ENCODE measurements at regions of chr6 and their contacts with region 1.

Region 1: DNA sequence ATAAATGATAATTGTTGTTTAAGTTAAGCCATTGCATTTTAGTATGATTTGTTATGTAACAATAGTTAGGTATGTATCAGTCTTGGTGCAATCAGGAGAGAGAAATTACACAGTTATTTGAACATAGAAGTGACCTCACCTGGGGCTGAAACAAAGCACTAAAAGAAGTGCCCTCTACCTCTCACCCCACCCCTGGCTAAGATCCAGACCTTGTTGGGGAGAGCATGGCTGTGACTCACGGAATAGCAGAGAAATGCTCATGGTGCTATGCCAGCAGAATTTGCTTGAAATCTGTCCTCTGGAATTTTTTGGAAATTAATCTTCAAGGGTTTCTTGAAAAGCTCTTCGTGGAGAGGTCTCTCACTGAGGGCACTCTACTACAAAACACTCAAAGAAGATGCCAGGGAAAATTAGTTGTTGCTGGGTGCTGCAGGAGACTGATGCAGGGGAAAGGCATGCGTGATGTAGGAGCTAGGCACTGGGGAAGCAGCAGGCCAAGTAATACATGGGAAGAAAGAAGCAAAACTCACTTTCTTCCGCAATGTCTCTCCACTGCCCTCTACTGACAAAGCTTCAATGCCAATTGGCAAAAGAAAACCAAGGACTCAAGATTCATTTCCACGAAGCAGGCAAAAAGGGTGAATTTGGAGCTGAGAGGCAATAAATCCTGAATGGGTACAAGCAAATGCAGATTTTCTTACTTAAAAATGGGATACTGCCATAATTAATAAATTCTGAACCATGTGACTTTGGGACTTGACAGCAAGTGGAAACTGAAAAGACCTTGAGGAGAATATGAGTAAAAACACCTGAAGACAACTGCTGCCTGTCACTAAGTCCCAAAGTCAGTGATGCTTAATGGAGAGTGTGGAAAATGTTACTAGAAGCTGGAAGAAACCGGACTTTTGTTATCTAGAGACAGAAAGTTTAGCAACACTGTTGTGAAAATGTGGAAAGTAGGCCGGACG is 136.3 kb upstream of the ZNF184 start:
- DNase-seq: peak; percentile 86
- H3K4me3 ChIP-seq: no peak overlapping the region
- H3K27ac ChIP-seq: peak overlapping the region; percentile 11
- H3K4me1 ChIP-seq: peaks cover 17% of the 10 kb centered on the region
- H3K27me3 ChIP-seq: no peaks in the 10 kb centered on the region
- CTCF ChIP-seq: peak; percentile 85 to 89

Region 2: GRCh38 chr6:27213544-27214125 is 395.6 kb before region 1 on chr6:
- CTCF ChIA-PET with region 1: no interaction called
- dilution Hi-C with region 1: no loop called
- in situ Hi-C with region 1: no loop called
- intact Hi-C with region 1: loop called (anchors 5 kb)
- DNase-seq: peak; percentile 40
- H3K4me3 ChIP-seq: peak overlapping the region in 1 of 3 experiments; percentile 58
- H3K27ac ChIP-seq: no peak overlapping the region
- H3K4me1 ChIP-seq: no peaks in the 10 kb centered on the region
- H3K27me3 ChIP-seq: no peaks in the 10 kb centered on the region
- CTCF ChIP-seq: no peak

Region 3: GRCh38 chr6:27433714-27434113 is 175.5 kb before region 1 on chr6:
- CTCF ChIA-PET with region 1: no interaction called
- dilution Hi-C with region 1: no loop called
- in situ Hi-C with region 1: no loop called
- intact Hi-C with region 1: no loop called
- DNase-seq: no peak
- H3K4me3 ChIP-seq: no peak overlapping the region
- H3K27ac ChIP-seq: no peak overlapping the region
- H3K4me1 ChIP-seq: no peaks in the 10 kb centered on the region
- H3K27me3 ChIP-seq: no peaks in the 10 kb centered on the region
- CTCF ChIP-seq: no peak

Region 4: DNA sequence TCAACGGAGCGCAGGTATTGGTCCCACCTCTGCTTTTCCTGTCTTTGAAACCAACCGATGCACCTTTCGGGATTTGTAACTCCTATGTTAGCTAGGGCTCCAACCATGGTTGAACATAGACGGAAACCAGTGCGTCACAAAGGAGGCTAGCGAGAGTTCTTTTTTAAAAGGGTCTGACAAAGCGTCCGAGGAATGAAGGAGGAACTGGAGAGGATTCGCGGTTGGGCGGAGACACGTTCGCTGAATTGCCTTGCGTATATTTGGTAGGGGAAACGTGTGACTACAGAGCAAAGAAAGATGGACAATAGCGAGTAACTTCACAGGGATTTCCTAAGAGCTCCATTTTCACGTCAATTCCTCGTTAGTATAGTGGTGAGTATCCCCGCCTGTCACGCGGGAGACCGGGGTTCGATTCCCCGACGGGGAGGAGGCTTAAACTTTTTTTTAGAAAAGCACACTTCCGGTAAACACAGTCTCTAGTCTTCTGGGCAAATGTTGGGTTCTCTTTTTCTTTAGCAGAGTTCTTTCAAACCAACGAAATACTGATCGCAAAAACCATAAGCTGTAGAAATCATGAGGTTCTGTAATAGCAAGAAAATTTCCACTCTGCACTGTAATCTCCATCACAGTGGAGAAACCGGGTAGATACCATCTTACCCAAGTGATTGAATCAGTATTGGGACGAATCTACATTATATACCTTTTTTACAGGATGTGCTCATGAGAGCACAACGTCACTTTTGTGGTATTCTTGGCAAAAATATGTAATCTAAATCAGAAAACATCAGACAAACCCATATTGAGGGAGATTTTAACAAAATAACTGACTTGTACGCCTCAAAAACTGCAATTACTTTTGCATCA is 129.6 kb before region 1 on chr6:
- CTCF ChIA-PET with region 1: no interaction called
- dilution Hi-C with region 1: no loop called
- in situ Hi-C with region 1: no loop called
- intact Hi-C with region 1: loop called (anchors 2 kb)
- DNase-seq: peak; percentile 89
- H3K4me3 ChIP-seq: peak overlapping the region; percentile 62 to 79 (median 76)
- H3K27ac ChIP-seq: peak overlapping the region; percentile 90
- H3K4me1 ChIP-seq: peaks cover 5% of the 10 kb centered on the region
- H3K27me3 ChIP-seq: no peaks in the 10 kb centered on the region
- CTCF ChIP-seq: no peak

Region 5: GRCh38 chr6:27518881-27519795 is 90.1 kb before region 1 on chr6:
- CTCF ChIA-PET with region 1: interaction called, 4 read pairs
- dilution Hi-C with region 1: no loop called
- in situ Hi-C with region 1: loop called in 1 of 2 experiments (anchors 10 kb)
- intact Hi-C with region 1: loop called (anchors 1 kb)
- DNase-seq: peak; percentile 86
- H3K4me3 ChIP-seq: peak overlapping the region; percentile 45 to 67 (median 55)
- H3K27ac ChIP-seq: peak overlapping the region; percentile 52
- H3K4me1 ChIP-seq: peaks cover 15% of the 10 kb centered on the region
- H3K27me3 ChIP-seq: peaks cover 3% of the 10 kb centered on the region
- CTCF ChIP-seq: peak; percentile 76 to 77

Region 6: GRCh38 chr6:27575594-27576361 is 33.4 kb before region 1 on chr6:
- CTCF ChIA-PET with region 1: no interaction called
- dilution Hi-C with region 1: no loop called
- in situ Hi-C with region 1: no loop called
- intact Hi-C with region 1: no loop called
- DNase-seq: peak; percentile 52
- H3K4me3 ChIP-seq: no peak overlapping the region
- H3K27ac ChIP-seq: no peak overlapping the region
- H3K4me1 ChIP-seq: no peaks in the 10 kb centered on the region
- H3K27me3 ChIP-seq: no peaks in the 10 kb centered on the region
- CTCF ChIP-seq: no peak

Region 7: DNA sequence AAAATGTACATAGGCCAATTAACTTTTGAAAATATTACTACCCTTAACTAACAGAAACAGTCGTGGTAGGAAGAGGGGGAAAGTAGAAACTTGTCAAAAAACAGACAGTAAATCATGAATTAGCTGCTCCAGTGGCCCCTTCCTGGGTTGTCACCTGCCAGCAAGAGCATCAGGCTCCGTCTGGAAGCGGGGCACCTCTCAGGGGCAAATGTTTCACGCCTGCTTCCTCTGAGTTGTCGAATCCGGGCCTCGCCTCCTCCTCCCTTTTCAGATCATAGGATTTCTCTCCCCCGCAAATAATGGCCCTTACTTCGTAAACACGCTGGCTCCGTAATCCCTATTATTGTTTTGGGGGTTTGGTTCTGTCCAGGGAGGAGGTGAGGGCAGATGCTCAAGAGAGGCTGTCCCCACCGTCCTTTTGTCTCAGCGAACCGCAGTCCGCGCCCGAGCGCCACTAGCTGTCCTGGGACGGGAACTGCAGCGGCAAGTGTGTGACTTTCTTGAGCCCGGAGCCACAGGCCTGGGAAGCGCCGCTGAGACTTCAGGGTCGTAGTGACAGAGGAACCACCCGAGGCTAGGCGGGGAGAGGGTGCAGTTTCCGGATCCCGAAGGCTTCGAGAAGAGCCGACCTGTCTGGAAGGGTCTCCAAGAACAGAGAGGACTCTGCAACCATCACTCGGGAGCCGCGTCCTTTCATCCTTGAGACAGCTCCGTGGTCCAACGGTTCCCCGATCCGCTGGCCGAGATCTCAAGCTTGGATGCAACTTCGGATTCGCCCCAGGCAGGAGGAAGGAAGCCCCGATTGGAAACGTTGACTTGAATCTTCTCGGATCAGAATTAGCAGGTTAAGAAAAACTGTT is 78.2 kb after region 1 on chr6:
- CTCF ChIA-PET with region 1: no interaction called
- dilution Hi-C with region 1: no loop called
- in situ Hi-C with region 1: no loop called
- intact Hi-C with region 1: loop called (anchors 2 kb)
- DNase-seq: peak; percentile 76
- H3K4me3 ChIP-seq: peak overlapping the region; percentile 65 to 67 (median 66)
- H3K27ac ChIP-seq: no peak overlapping the region
- H3K4me1 ChIP-seq: peaks cover 5% of the 10 kb centered on the region
- H3K27me3 ChIP-seq: no peaks in the 10 kb centered on the region
- CTCF ChIP-seq: peak; percentile 72 to 83

Measured in mammary epithelial cell (primary cell).